OCI-LY7 (cell line): ENCODE measurements at regions of chr2 and their contacts with region 1.

Region 1: DNA sequence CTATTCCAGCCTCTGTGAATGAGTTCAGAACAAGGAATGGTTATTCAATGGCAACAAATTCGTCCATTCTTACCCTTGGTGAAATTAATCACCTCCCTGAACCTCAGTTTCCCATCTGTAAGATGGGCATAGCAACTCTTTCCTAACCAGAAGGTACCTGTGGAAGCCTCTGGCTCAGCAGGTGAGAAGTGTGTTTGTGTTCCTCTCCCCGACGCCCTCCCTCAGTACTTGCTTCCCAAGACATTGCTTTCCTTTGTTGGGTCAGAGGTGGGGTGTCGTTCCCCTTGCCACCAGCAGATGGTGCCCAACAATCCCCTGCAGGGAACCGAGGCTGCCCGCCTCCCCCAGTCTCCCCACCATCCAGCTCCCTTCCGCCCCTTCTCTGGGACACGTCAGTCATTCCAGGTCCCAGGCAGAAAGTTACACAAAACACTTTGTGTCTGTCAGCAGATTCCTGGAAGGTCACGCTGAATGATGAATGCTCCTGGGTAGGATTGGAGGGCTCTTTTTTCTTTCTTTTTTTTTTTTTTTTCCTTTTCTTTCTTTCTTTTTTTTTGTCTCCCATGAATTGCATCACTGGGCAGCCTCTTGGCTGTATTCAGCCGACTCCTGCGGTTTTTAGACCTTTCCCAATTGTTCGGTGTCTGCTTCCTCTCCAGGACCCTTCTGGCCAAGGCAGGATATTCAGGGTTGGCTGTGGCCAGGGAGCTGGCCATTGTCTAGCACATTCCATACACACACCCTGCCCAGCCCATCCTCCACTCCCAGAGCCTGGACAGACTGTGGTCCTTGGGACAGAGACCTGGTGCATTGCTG is 117.3 kb downstream of the LPIN1 start:
- DNase-seq: peak; percentile 74
- H3K4me3 ChIP-seq: no peak overlapping the region
- H3K27ac ChIP-seq: no peak overlapping the region
- H3K4me1 ChIP-seq: peaks cover 20% of the 10 kb centered on the region
- CTCF ChIP-seq: peak; percentile 93

Region 2: DNA sequence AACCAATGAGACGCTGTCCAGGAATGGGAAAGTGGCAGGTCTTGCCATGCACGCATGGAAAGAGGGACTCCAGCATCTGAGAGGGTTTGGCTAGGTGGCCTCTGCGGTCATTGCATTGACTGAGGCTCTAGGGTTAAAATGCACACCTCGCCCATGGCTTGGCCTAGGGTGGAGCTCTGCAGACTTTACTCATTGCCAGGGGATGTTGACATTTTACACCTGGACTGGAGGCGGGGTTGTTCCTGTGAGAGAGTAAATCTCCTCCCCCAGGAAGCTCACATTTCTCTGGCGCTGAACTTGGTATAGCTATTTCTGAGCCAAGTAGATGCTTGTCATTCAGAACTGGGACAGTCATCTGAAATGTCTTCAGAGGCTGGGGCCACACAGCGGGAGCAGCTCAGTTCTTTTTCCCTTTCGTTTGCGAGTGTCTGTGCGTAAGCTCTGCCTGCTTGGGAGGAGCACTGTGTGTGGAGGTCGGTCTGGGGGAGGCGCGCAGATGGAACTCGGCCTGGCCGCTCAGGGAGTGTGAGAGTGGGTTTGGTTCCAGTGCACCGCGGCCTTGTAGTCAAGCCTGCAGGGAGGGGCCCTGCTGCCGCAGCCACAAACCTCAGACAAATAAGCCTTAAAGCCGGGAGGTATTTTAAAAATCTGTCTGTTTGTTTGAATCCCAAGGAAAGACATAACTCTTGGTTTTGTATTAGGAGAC is 40.8 kb before region 1 on chr2:
- CTCF ChIA-PET with region 1: no interaction called
- POLR2A ChIA-PET with region 1: no interaction called
- intact Hi-C with region 1: no loop called
- DNase-seq: no peak
- H3K4me3 ChIP-seq: no peak overlapping the region
- H3K27ac ChIP-seq: no peak overlapping the region
- H3K4me1 ChIP-seq: no peaks in the 10 kb centered on the region
- CTCF ChIP-seq: no peak

Region 3: DNA sequence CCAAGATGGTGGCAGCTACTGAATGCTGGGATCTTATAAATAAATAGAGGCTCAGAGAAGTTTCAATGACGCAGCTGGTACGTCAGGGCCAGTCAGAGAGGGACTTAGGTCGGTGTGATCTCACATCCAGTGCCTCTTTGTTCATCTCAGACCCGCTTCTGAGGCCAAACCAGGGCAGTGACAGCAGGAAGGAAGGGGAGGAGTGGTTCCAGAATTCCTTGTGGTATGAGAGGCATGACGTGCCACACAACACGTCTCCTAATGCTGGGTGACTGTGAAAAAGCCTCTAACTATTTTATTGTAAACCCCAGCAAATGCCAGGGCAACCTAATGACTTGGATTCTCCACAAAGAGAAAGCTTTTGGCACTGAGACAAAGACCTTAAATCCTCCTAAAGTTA is 306.0 kb after region 1 on chr2:
- CTCF ChIA-PET with region 1: no interaction called
- POLR2A ChIA-PET with region 1: no interaction called
- intact Hi-C with region 1: loop called (anchors 5 kb)
- DNase-seq: no peak
- H3K4me3 ChIP-seq: no peak overlapping the region
- H3K27ac ChIP-seq: no peak overlapping the region
- H3K4me1 ChIP-seq: no peaks in the 10 kb centered on the region
- CTCF ChIP-seq: no peak

Region 4: DNA sequence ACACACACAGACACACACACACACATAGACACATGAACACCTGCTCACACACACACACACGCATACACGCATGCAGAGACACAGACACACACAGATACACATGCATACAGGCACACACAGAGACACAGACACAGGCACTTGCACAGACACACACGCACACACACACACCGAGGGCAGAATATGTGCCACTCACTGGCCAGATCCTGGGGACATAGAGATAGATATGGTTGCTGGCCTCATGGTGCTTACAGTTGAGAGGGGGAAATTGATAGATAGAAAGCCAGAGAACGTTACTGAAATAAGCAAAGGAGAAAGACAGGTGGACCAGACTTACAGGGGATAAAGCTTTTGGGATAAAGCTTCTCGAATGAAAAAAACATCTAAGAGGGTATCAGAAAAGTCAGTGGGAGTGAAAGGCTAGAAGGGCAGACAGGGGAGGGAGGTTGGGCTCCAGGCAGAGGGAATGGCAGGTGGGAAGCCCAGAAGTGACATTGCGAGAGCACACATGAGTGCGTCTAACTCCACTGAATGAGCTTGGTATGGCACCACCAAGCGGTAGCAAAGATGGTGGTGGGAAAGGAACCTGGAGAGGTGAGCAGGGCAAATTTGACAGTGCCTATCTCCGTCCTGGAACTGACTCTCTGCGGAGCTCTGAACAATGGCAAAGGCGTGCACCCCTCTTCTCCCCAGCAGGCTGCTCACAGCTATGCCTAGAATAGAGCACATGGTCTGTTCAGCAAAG is 462.9 kb after region 1 on chr2:
- CTCF ChIA-PET with region 1: no interaction called
- POLR2A ChIA-PET with region 1: no interaction called
- intact Hi-C with region 1: loop called (anchors 5 kb)
- DNase-seq: peak; percentile 27
- H3K4me3 ChIP-seq: no peak overlapping the region
- H3K27ac ChIP-seq: no peak overlapping the region
- H3K4me1 ChIP-seq: no peaks in the 10 kb centered on the region
- CTCF ChIP-seq: peak; percentile 51; the same call in 1 of the 2 replicates